T-cell (primary cell): ENCODE measurements at regions of chr11 and their contacts with region 1.

Region 1: DNA sequence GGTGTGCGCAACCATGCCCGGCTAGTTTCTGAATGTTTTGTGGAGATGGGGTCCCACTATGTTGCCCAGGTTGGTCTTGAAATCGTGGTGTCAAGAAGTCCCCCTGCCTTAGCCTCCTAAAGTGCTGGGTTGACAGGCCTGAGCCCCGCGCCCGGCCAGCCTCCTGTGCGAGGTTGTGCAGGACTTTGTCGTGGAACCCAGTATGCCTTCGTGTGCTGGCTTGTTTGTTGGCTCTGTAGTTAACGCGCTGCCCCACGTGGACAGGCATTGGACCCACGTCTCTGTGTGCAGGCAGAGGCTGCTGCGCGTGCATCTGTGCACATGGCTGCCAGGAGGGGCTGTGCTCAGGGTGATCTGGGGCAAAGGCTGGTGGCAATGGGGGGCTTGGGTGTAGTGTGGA is 33.9 kb upstream of the ZNF195 start:
- DNase-seq: no peak
- ATAC-seq: no peak
- H3K4me3 ChIP-seq: no peak overlapping the region
- H3K4me3 Mint-ChIP-seq: no peak overlapping the region
- H3K27ac ChIP-seq: no peak overlapping the region
- H3K27ac Mint-ChIP-seq: no peak overlapping the region
- H3K4me1 ChIP-seq: peaks cover 0 to 5% of the 10 kb centered on the region in 2 experiments
- H3K4me1 Mint-ChIP-seq: peaks cover 8 to 12% (median 9%) of the 10 kb centered on the region in 3 donors
- H3K27me3 ChIP-seq: peaks cover 0 to 3% of the 10 kb centered on the region in 2 experiments
- H3K27me3 Mint-ChIP-seq: no peaks in the 10 kb centered on the region

Region 2: DNA sequence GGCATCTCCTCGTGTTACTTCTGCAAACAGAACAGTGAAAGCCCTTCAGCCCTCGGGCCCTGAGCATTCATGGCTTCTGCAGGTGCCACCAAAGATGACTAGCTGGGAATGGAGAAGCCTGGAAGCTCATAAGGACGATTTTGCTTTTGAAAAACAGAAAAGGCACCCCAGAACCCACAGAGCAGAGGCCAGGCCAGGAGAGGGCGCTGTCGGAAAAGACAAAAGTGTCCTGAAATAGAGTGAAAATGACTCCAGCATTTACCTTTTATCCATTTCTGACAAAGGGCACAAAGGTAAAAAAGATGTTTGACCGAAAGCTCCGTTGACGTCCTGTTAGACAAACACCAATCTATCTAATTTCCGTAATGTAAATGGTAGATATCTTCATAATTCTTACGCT is 71.5 kb before region 1 on chr11:
- CTCF ChIA-PET with region 1: interaction called in 1 of 2 experiments, 12 read pairs
- POLR2A ChIA-PET with region 1: no interaction called
- DNase-seq: peak in 34 of 35 experiments; percentile 9 to 76 (median 56)
- ATAC-seq: peak in 1 of 4 experiments; percentile 46
- H3K4me3 ChIP-seq: no peak overlapping the region
- H3K4me3 Mint-ChIP-seq: no peak overlapping the region
- H3K27ac ChIP-seq: no peak overlapping the region
- H3K27ac Mint-ChIP-seq: no peak overlapping the region
- H3K4me1 ChIP-seq: no peaks in the 10 kb centered on the region
- H3K4me1 Mint-ChIP-seq: no peaks in the 10 kb centered on the region
- H3K27me3 ChIP-seq: peaks cover 0 to 26% of the 10 kb centered on the region in 2 experiments
- H3K27me3 Mint-ChIP-seq: peaks cover 29 to 47% of the 10 kb centered on the region in 2 donors

Region 3: DNA sequence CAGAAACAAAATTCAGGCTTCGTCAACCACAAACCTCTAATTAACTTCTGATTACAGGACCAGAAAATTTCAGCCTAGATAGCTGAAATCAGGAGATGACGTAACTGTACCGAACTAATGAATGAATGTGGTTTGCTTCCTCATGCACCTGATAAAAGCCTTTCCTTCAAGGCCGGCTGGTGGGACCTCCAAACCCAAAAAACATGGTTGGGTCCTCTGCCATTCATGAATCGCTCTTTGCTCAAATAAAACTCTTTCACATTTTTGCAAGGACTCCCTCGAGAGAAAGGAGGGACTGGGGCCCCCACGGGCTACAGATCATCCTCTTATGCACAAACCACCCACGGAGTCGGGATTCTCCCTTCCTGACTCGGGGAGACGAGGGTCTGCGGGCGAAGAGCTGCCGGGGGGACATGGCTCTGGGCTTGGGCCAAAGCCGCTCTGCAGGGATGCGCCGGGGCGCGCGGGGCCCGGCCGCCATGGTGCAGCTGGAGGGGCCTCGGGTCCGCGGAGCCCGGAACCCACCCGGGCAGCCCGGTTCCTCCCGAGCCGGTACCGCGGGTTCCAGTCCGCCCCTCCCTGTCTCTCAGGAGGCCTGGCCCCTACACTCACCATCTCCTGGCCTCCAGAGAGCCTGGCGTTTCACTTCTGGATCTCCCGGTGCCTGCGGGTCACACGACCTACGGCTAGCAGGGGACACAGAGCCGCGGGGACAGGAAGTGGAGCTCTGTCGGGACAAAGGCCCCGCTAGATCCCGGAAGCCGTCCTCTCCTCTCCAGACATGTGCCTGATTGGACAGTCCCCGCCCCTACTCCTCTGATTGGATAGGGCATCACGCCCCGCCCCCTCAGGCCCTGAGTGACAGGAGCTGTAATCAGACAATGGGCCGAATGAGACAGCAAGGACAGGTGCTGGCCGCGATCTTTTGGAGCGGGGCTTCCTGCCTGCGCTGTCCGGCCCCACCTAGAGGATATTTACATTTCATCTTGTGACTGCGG is 34.1 kb before region 1 on chr11 and contains the start of gene ZNF195:
- CTCF ChIA-PET with region 1: interaction called in 1 of 2 experiments, 11 read pairs
- POLR2A ChIA-PET with region 1: no interaction called
- DNase-seq: peak; percentile 91 to 98 (median 96)
- ATAC-seq: peak; percentile 100
- H3K4me3 ChIP-seq: peak within 1 kb of the TSS; percentile 79 to 82
- H3K4me3 Mint-ChIP-seq: peak within 1 kb of the TSS; percentile 97 to 99 (median 98)
- H3K27ac ChIP-seq: peak within 1 kb of the TSS; percentile 58
- H3K27ac Mint-ChIP-seq: peak within 1 kb of the TSS; percentile 97
- H3K4me1 ChIP-seq: peaks cover 15 to 29% of the 10 kb centered on the region in 2 experiments
- H3K4me1 Mint-ChIP-seq: peaks cover 54 to 63% (median 59%) of the 10 kb centered on the region in 3 donors
- H3K27me3 ChIP-seq: no peaks in the 10 kb centered on the region
- H3K27me3 Mint-ChIP-seq: no peaks in the 10 kb centered on the region
- total RNA-seq, gene ZNF195: 22.9 to 35.8 (median 32.0) TPM